GM12878 (cell line): ENCODE measurements at regions of chr3 and their contacts with region 1.

Region 1: DNA sequence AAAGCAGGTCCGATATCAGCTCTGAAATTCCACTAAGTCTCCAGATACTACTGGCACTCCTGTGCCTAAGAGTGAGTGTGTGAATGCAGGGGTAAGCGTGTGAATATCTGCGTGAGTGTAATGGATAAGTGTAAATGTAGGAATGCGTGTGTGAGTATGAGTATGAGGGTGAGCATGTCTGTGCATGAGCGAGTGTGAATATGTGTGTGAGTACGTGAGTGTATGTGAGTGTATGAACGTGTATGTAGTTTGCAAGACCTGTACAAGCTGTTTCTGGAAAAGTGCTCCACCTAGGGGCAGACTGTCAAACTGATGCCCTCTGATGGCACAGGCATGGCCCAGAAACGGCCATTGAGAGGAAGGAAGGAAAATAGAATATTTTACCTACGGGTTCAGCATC is 24.4 kb upstream of the FRMD4B start:
- DNase-seq: peak; percentile 61
- ATAC-seq: peak; percentile 100
- H3K4me3 ChIP-seq: no peak overlapping the region
- H3K27ac ChIP-seq: no peak overlapping the region
- H3K4me1 ChIP-seq: no peaks in the 10 kb centered on the region
- H3K27me3 ChIP-seq: no peaks in the 10 kb centered on the region
- CTCF ChIP-seq: peak; percentile 85 to 92 (median 86)
- EP300 ChIP-seq: no peak
- POLR2A ChIP-seq: no peak
- RAD21 ChIP-seq: peak; percentile 76

Region 2: GRCh38 chr3:69324362-69325025 is 85.8 kb before region 1 on chr3:
- CTCF ChIA-PET with region 1: interaction called, 95 read pairs
- POLR2A ChIA-PET with region 1: interaction called, 3 read pairs
- RAD21 ChIA-PET with region 1: interaction called, 83 read pairs
- SMC1A ChIA-PET with region 1: interaction called, 111 read pairs
- in situ Hi-C with region 1: no loop called
- intact Hi-C with region 1: loop called (anchors 1 kb)
- DNase-seq: no peak
- ATAC-seq: peak; percentile 70
- H3K4me3 ChIP-seq: no peak overlapping the region
- H3K27ac ChIP-seq: no peak overlapping the region
- H3K4me1 ChIP-seq: peaks cover 28% of the 10 kb centered on the region
- H3K27me3 ChIP-seq: no peaks in the 10 kb centered on the region
- CTCF ChIP-seq: peak; percentile 71 to 81 (median 77)
- EP300 ChIP-seq: 0 out of 4 replicates have a peak, but pooled peaks of 1 of the 2 experiments have one; percentile 15
- POLR2A ChIP-seq: no peak
- RAD21 ChIP-seq: peak; percentile 98

Region 3: DNA sequence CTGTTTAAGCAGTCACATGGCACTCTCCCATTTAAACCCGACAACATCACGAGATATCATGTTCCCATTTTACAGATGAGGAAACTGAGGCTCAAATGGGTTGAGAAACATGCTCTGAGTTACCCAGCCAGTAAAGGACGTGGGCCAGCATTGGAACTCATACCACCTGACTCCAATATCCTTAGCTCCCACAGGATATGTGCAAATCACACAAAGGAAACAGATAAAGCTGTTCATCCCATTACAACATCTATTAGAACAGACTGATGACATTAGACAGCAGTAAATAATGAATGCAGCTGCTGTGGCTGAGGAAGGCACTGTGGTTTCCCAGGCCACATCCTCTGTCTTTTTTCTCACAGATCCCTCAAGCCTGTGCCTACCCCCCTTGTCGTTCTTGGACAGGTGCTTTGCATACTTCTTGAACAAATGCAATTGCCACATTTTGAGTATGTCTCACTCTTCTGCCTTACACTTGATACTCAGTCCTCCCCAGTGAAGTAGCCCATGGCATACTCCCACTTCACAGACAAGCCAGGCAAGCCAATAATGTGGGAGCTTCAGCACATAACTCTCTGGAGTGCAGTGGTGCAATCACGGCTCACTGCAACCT is 42.0 kb before region 1 on chr3:
- CTCF ChIA-PET with region 1: interaction called, 20 read pairs
- POLR2A ChIA-PET with region 1: no interaction called
- RAD21 ChIA-PET with region 1: interaction called, 12 read pairs
- SMC1A ChIA-PET with region 1: interaction called, 19 read pairs
- in situ Hi-C with region 1: no loop called
- intact Hi-C with region 1: no loop called
- DNase-seq: peak; percentile 91
- ATAC-seq: peak; percentile 98
- H3K4me3 ChIP-seq: no peak overlapping the region
- H3K27ac ChIP-seq: no peak overlapping the region
- H3K4me1 ChIP-seq: peaks cover 23% of the 10 kb centered on the region
- H3K27me3 ChIP-seq: no peaks in the 10 kb centered on the region
- CTCF ChIP-seq: no peak
- EP300 ChIP-seq: peak; percentile 79 to 84; a peak in 2 of 4 replicates
- POLR2A ChIP-seq: no peak
- RAD21 ChIP-seq: no peak

Region 4: DNA sequence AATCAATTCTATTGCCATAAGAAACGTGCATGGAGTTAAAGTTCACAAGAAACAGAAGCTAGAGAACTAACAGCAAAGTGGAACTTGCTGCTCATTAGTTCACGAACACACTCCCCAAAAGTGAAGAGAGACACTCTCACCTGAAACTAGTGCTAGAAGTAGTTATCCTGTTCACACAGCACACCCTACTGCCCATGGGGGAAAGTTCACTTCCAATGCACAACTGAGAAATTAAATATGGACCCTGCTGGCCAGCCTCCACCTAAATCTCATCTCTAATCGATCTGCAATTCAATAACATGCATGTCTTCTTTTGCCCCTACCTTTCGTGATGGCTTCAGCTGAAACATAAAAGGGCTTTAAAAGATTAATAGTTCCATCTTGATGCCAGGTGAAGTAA is 15.0 kb after region 1 on chr3:
- CTCF ChIA-PET with region 1: interaction called, 66 read pairs
- POLR2A ChIA-PET with region 1: interaction called, 3 read pairs
- RAD21 ChIA-PET with region 1: interaction called, 8 read pairs
- SMC1A ChIA-PET with region 1: interaction called, 46 read pairs
- in situ Hi-C with region 1: no loop called
- intact Hi-C with region 1: no loop called
- DNase-seq: no peak
- ATAC-seq: peak; percentile 92
- H3K4me3 ChIP-seq: no peak overlapping the region
- H3K27ac ChIP-seq: no peak overlapping the region
- H3K4me1 ChIP-seq: no peaks in the 10 kb centered on the region
- H3K27me3 ChIP-seq: no peaks in the 10 kb centered on the region
- CTCF ChIP-seq: peak; percentile 67 to 72 (median 68)
- EP300 ChIP-seq: no peak
- POLR2A ChIP-seq: no peak
- RAD21 ChIP-seq: peak; percentile 78

Region 5: GRCh38 chr3:69439643-69440270 is 29.5 kb after region 1 on chr3:
- CTCF ChIA-PET with region 1: interaction called, 23 read pairs
- POLR2A ChIA-PET with region 1: no interaction called
- RAD21 ChIA-PET with region 1: interaction called, 15 read pairs
- SMC1A ChIA-PET with region 1: interaction called, 14 read pairs
- in situ Hi-C with region 1: no loop called
- intact Hi-C with region 1: no loop called
- DNase-seq: peak; percentile 16
- ATAC-seq: peak; percentile 31
- H3K4me3 ChIP-seq: no peak overlapping the region
- H3K27ac ChIP-seq: no peak overlapping the region
- H3K4me1 ChIP-seq: 0 out of 2 replicates have a peak, but pooled peaks cover 2% of the 10 kb centered on the region
- H3K27me3 ChIP-seq: no peaks in the 10 kb centered on the region
- CTCF ChIP-seq: peak; percentile 50 to 64 (median 54)
- EP300 ChIP-seq: no peak
- POLR2A ChIP-seq: no peak
- RAD21 ChIP-seq: peak; percentile 53